Posterior cingulate gyrus (tissue), 11 donors: ENCODE measurements at regions of chr16 and their contacts with region 1.

Region 1: DNA sequence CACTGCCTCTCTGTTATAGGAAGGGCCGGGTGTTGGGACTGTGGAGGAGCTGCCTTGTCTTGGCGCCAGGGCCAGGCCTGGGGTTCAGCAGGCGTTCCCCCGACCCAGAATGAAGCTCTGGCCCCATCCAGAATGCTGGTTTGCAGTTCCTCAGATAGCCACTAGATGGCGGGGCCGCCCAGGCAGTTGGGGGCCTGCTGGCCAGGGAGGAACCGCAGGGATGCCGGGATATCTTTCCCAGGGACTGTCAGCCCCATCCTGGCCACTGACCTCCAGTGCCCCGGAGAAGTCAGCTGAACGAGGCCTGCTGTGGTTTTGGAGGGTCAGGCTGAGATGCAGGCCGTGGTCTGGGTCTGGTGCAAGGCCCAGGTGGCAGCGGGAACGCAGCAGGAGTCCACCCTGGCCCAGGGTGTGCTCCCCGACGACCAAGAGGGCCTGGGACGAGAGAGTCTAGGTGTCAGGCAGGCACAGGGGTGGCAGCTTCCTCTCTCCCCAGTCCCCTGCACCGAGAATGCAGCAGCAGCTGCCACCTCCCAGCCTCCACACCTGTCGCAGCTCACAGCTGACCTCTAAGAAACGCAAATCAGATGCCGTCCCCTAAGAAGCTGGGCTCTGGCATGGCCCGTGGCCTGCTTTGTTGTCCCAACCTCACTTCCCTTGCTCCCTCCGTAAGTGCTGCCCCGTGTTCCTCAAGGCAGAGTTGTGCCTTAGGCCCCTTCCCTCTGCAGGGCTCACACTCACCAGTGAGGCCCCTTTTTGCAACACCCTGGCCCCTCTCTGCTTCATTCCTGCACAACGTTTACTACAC is 51.2 kb downstream of the RMI2 start:
- DNase-seq: peak; percentile 63 to 97 (median 83)

Region 2: GRCh38 chr16:11312718-11313492 is 83.5 kb before region 1 on chr16:
- intact Hi-C with region 1: no loop called
- DNase-seq: peak in 1 of 10 donors; percentile 64

Region 3: DNA sequence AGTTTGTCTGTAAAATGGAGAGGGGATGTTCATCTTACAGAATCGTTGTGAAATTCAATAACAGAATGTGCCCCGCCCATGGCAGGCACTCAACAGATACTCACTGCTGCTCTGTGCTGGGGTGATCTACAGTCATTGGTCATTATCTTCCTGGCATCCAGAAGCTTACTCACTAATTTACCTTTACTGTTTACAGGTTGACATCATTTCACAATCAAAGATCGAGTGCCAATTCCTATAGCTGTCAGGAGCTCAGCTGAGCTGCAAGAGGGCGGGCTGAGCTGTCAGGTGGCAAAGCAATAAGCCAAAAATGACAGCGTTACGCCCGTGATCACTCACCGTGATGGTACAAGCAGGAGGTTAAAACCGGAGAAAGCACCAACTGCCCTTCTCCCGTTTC is 139.0 kb after region 1 on chr16:
- intact Hi-C with region 1: loop called (anchors 10 kb)
- DNase-seq: no peak

Region 4: DNA sequence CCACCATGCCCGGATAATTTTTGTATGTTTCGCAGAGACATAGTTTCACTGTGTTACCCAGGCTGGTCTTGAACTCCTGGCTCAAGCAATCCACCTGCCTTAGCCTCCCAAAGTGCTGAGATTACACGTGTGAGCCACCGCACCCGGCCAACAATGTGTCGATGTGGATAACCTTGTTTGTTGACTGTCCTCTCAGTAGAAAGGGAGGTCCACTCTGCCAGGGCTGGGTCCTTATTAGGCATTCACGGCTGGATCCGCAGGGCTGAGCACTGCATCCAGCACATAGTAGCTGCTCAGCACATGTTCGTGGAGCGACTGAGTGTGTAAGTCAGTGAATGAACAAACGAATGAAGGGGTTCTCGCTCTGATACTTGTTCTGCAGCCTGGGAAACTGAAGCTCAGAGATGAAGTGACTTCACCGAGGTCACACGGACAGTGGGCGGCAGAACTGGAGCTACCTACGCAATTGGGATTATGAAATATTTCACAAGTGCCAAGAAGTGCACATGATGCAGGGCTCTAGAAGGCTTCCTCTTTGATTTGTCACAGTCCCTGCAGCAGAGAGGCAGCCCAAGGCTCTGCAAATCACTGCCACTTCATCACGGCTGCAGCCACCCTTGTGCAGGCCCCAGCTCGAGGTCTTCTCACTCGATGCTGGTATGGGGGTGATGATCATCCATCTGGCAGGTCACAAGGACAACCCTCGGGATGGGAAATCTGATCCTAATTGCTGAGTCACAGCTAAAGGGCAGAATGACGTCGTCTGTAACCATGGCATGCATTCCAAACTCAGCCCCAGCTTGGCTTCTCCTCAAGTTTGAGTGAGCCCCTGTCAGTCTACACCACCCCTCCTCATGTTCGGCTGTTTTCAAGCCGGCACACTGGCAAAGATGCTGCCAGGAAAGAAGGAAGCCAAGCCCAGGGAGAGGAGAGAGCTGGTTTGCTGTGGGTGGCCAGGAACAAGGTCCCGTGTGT is 243.8 kb after region 1 on chr16:
- intact Hi-C with region 1: loop called (anchors 1 kb)
- DNase-seq: peak in 4 of 10 donors; percentile 33 to 92 (median 48)

Region 5: GRCh38 chr16:11715246-11715947 is 319.0 kb after region 1 on chr16:
- intact Hi-C with region 1: loop called (anchors 1 kb)
- DNase-seq: no peak

Region 6: DNA sequence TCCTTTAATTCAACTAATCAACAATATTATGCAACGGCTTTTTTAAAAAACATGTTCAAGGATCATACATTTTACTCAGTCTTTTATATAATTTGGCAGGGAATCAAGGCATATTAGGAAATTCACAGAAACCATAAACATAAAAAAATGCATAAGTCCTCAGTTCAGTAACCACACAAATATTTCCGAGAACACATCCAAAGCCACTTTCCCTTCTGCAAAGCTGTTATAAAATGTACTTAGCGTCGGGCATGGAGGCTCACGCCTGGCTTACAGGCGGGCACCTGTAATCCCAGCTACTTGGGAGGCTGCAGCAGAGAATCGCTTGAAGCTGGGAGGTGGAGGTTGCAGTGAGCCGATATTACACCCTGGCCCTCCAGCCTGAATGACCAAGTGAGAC is 410.3 kb after region 1 on chr16:
- intact Hi-C with region 1: loop called (anchors 5 kb)
- DNase-seq: peak in 2 of 10 donors; percentile 25 to 41